ENCODE measurements at regions of chr3 and their contacts with region 1.

Region 1: GRCh38 chr3:119600732-119601131 is 3.0 kb downstream of the PLA1A start:
- DNase-seq: peak; percentile 85
- ATAC-seq: peak; percentile 81
- H3K4me3 ChIP-seq: no peak overlapping the region
- H3K27ac ChIP-seq: peak overlapping the region; percentile 87
- H3K4me1 ChIP-seq: peaks cover 62% of the 10 kb centered on the region
- H3K27me3 ChIP-seq: no peaks in the 10 kb centered on the region
- CTCF ChIP-seq: peak; percentile 88 to 96 (median 91); a peak in 5 of 6 replicates
- EP300 ChIP-seq: no peak
- POLR2A ChIP-seq: peak; percentile 66
- RAD21 ChIP-seq: peak; percentile 82

Region 2: DNA sequence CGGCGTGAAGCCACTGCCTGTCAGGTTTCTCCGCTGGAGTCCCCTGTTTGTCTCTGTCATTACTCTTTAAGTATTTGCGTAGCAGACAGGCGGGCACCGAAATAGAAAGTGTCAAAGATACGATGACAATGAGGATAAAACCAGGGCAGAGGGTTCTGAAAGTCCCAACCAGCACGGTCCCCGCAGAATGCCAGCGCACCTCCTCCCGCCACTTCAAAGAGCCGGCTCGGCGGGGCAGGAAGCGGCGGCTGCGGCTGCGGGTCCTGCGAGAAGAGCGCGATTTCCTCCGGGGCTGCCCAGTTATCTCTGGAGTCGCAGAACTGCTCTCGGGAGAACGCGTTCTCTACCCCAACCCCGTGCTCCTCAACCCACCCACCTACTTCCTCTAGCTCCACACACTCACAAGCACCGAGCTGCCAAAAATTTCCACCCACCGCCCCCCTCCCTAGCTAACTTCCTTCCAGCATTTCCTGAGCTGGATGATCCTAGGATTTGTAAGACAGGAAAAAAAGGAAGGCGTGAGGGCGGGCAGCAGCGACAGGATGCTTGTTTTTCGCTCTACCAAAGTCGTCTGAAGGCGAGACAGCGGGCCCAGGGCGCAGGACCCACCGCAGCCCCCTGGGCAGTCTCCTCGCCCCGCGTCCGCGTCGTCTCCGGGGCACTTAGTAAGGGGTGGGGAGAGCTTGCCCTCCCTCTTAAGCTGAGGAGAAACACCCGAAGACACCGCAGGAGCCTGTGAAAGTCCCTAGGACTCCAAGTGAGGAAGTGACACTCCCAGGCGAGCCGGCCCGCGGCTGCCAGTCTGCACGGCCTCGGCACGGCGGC is 306.6 kb before region 1 on chr3 and contains the start of gene ARHGAP31:
- CTCF ChIA-PET with region 1: no interaction called
- POLR2A ChIA-PET with region 1: interaction called, 4 read pairs
- RAD21 ChIA-PET with region 1: interaction called, 17 read pairs
- SMC1A ChIA-PET with region 1: interaction called, 3 read pairs
- in situ Hi-C with region 1: no loop called
- intact Hi-C with region 1: no loop called
- DNase-seq: peak; percentile 62
- ATAC-seq: peak; percentile 82
- H3K4me3 ChIP-seq: peak within 1 kb of the TSS; percentile 94
- H3K27ac ChIP-seq: peak within 1 kb of the TSS; percentile 96
- H3K4me1 ChIP-seq: peaks cover 27% of the 10 kb centered on the region
- H3K27me3 ChIP-seq: no peaks in the 10 kb centered on the region
- CTCF ChIP-seq: no peak
- EP300 ChIP-seq: peak in 1 of 2 experiments; percentile 14; a peak in 1 of 4 replicates
- POLR2A ChIP-seq: peak; percentile 81
- RAD21 ChIP-seq: no peak
- polyA plus RNA-seq, gene ARHGAP31: 0.97 to 1.6 TPM

Region 3: GRCh38 chr3:119550192-119550910 is 50.4 kb before region 1 on chr3:
- CTCF ChIA-PET with region 1: interaction called, 46 read pairs
- POLR2A ChIA-PET with region 1: interaction called, 104 read pairs
- RAD21 ChIA-PET with region 1: interaction called, 239 read pairs
- SMC1A ChIA-PET with region 1: interaction called, 151 read pairs
- in situ Hi-C with region 1: no loop called
- intact Hi-C with region 1: no loop called
- DNase-seq: no peak
- ATAC-seq: peak; percentile 52
- H3K4me3 ChIP-seq: peak overlapping the region; percentile 57
- H3K27ac ChIP-seq: peak overlapping the region; percentile 93
- H3K4me1 ChIP-seq: peaks cover 43% of the 10 kb centered on the region
- H3K27me3 ChIP-seq: no peaks in the 10 kb centered on the region
- CTCF ChIP-seq: peak; percentile 11 to 50 (median 12); a peak in 3 of 6 replicates
- EP300 ChIP-seq: no peak
- POLR2A ChIP-seq: peak; percentile 54
- RAD21 ChIP-seq: peak; percentile 52

Region 4: DNA sequence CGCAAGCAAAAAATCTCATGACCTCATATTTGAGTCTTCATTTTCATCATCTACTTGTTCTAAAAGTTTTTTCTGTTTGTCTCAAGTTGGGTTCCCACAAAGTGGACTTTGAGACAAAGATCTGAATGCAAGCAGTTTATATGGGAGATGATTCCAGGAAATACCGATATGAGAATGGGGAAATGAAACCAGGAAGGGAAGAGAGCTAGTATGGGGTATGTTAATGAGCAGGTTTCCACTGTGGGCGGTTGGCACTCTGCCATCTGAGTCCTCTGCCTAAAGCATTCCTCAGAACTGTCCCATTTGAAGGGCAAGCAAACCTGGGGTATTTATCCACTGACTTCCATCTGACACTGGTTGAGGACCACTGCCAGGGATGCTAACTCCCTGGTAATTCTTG is 12.6 kb before region 1 on chr3:
- CTCF ChIA-PET with region 1: interaction called, 56 read pairs
- POLR2A ChIA-PET with region 1: interaction called, 133 read pairs
- RAD21 ChIA-PET with region 1: interaction called, 76 read pairs
- SMC1A ChIA-PET with region 1: interaction called, 62 read pairs
- in situ Hi-C with region 1: no loop called
- intact Hi-C with region 1: no loop called
- DNase-seq: no peak
- ATAC-seq: peak; percentile 67
- H3K4me3 ChIP-seq: no peak overlapping the region
- H3K27ac ChIP-seq: peak overlapping the region; percentile 20; the same call in 1 of the 2 replicates
- H3K4me1 ChIP-seq: peaks cover 19% of the 10 kb centered on the region
- H3K27me3 ChIP-seq: no peaks in the 10 kb centered on the region
- CTCF ChIP-seq: no peak
- EP300 ChIP-seq: 0 out of 4 replicates have a peak, but pooled peaks of 1 of the 2 experiments have one; percentile 45
- POLR2A ChIP-seq: no peak
- RAD21 ChIP-seq: no peak

Region 5: GRCh38 chr3:119643528-119643927 is 42.8 kb after region 1 on chr3:
- CTCF ChIA-PET with region 1: interaction called, 43 read pairs
- POLR2A ChIA-PET with region 1: interaction called, 8 read pairs
- RAD21 ChIA-PET with region 1: interaction called, 53 read pairs
- SMC1A ChIA-PET with region 1: interaction called, 87 read pairs
- in situ Hi-C with region 1: no loop called
- intact Hi-C with region 1: loop called (anchors 1 kb)
- DNase-seq: no peak
- ATAC-seq: no peak
- H3K4me3 ChIP-seq: no peak overlapping the region
- H3K27ac ChIP-seq: no peak overlapping the region
- H3K4me1 ChIP-seq: peaks cover 15% of the 10 kb centered on the region
- H3K27me3 ChIP-seq: no peaks in the 10 kb centered on the region
- CTCF ChIP-seq: no peak
- EP300 ChIP-seq: no peak
- POLR2A ChIP-seq: no peak
- RAD21 ChIP-seq: no peak

Region 6: DNA sequence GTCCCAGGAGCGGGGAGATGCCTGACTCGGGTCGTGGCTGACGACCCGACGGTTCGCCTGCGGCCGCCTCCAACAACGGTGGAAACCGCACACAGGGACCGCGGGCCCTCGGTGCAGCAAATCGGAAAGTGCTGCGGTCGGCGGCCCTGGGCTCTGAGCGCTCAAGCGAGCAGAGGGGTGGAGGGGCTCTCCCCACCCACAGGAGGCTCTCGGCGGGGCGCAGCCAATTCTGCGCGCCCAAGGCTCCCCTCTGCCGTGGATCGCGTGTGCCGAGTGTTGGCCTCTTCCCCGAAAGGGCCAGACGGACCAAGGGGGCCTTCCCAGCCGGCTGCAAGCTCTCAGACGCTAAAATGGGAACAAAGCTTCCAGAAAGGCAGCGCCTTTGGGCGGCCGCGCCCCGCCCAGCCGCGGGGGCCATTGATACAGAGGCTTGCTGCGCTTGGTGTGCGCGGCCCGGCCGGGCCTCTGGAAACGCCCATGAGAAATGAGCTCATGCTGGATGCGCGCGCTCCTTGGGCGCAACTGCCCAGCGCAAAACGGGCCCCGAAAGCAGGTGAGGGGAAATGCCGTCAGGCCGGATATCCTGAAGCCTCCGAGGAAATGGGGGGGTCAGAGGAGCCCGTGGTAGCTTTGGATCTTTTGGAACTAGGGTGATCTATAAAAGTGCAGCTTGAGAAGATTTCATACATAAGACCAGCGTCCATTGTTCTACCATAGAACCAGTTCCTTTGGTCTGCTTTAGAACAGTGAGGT is 494.7 kb after region 1 on chr3:
- CTCF ChIA-PET with region 1: interaction called, 3 read pairs
- POLR2A ChIA-PET with region 1: no interaction called
- RAD21 ChIA-PET with region 1: interaction called, 14 read pairs
- SMC1A ChIA-PET with region 1: no interaction called
- in situ Hi-C with region 1: no loop called
- intact Hi-C with region 1: no loop called
- DNase-seq: peak; percentile 68
- ATAC-seq: peak; percentile 66
- H3K4me3 ChIP-seq: peak overlapping the region; percentile 93
- H3K27ac ChIP-seq: peak overlapping the region; percentile 94
- H3K4me1 ChIP-seq: no peaks in the 10 kb centered on the region
- H3K27me3 ChIP-seq: no peaks in the 10 kb centered on the region
- CTCF ChIP-seq: no peak
- EP300 ChIP-seq: peak; percentile 5 to 72; a peak in 3 of 4 replicates
- POLR2A ChIP-seq: peak; percentile 92
- RAD21 ChIP-seq: no peak